ENCODE measurements at regions of chr16 and their contacts with region 1.

Region 1: GRCh38 chr16:58129097-58129936 is at the start of gene CFAP20:
- DNase-seq: peak; percentile 99
- H3K4me3 ChIP-seq: peak within 1 kb of the TSS; percentile 68 to 96
- H3K27ac ChIP-seq: peak within 1 kb of the TSS; percentile 74
- H3K4me1 ChIP-seq: peaks cover 42% of the 10 kb centered on the region
- H3K27me3 ChIP-seq: no peaks in the 10 kb centered on the region
- CTCF ChIP-seq: no peak
- POLR2A ChIP-seq: peak; percentile 75 to 83
- total RNA-seq, gene CFAP20: 72.7 TPM

Region 2: GRCh38 chr16:57734925-57735754 is 394.2 kb before region 1 on chr16:
- intact Hi-C with region 1: loop called (anchors 10 kb)
- DNase-seq: peak in 1 of 2 donors; percentile 100
- H3K4me3 ChIP-seq: peak overlapping the region; percentile 91 to 93
- H3K27ac ChIP-seq: peak overlapping the region; percentile 77
- H3K4me1 ChIP-seq: peaks cover 42% of the 10 kb centered on the region
- H3K27me3 ChIP-seq: no peaks in the 10 kb centered on the region
- CTCF ChIP-seq: no peak
- POLR2A ChIP-seq: peak in 1 of 2 donors; percentile 45

Region 3: DNA sequence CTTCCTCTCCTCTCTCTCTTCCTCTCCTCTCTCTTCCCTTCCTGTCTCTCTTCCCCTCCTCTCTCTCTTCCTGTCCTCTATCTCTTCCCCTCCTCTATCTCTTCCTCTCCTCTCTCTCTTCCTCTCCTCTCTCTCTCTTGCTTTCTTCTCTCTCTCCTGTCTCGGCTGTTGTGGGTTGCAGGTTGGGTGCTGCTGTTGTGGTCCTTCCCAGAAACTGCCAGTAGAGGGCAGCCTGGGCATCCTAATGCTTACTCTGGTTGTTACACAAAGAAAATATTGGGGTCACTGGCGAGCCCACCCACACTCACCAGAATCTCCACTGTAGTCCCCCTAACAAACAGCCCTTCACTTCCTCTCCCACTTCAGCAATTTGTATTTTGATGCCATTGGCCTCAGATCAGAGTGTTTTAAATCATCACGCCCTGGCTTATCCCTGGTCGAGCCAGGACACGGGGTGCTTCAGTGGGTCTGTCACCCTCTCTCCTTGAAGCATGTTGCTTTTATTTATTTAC is 108.6 kb before region 1 on chr16:
- intact Hi-C with region 1: loop called (anchors 5 kb)
- DNase-seq: no peak
- H3K4me3 ChIP-seq: no peak overlapping the region
- H3K27ac ChIP-seq: no peak overlapping the region
- H3K4me1 ChIP-seq: peaks cover 29% of the 10 kb centered on the region
- H3K27me3 ChIP-seq: no peaks in the 10 kb centered on the region
- CTCF ChIP-seq: peak; percentile 66 to 79 (median 76)
- POLR2A ChIP-seq: no peak

Region 4: DNA sequence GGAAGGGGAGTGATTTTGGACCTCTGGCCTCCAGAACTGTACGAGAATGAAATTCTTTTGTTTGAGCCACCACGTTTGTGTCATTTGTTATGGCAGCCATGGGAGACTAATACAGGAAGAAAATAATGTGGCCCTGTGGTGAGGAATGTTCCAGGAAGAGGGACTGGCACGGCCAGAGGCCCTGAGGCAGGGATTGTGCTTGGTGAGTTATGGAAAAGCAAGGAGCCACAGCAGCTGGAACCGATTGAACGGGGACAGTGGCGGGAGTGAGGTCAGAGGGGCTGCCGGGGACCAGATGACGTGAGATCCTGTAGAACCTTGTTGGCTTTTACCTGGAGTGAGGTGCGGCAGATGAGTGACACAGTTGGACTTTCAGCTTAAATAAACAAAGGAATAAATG is 51.5 kb before region 1 on chr16:
- intact Hi-C with region 1: no loop called
- DNase-seq: no peak
- H3K4me3 ChIP-seq: no peak overlapping the region
- H3K27ac ChIP-seq: no peak overlapping the region
- H3K4me1 ChIP-seq: no peaks in the 10 kb centered on the region
- H3K27me3 ChIP-seq: no peaks in the 10 kb centered on the region
- CTCF ChIP-seq: no peak
- POLR2A ChIP-seq: no peak